B cell (primary cell): ENCODE measurements at regions of chr15 and their contacts with region 1.

Region 1: GRCh38 chr15:92903941-92904831 is 4.1 kb downstream of the CHD2 start:
- DNase-seq: peak; percentile 99
- ATAC-seq: peak; percentile 82
- H3K4me3 ChIP-seq: peak overlapping the region; percentile 64 to 100 (median 85)
- H3K4me3 Mint-ChIP-seq: peak overlapping the region; percentile 92
- H3K27ac ChIP-seq: peak overlapping the region; percentile 95 to 97
- H3K27ac Mint-ChIP-seq: peak overlapping the region; percentile 100
- H3K4me1 ChIP-seq: peaks cover 48 to 57% of the 10 kb centered on the region in 2 donors
- H3K4me1 Mint-ChIP-seq: peaks cover 64% of the 10 kb centered on the region
- H3K27me3 ChIP-seq: no peaks in the 10 kb centered on the region
- H3K27me3 Mint-ChIP-seq: no peaks in the 10 kb centered on the region
- CTCF ChIP-seq: no peak

Region 2: DNA sequence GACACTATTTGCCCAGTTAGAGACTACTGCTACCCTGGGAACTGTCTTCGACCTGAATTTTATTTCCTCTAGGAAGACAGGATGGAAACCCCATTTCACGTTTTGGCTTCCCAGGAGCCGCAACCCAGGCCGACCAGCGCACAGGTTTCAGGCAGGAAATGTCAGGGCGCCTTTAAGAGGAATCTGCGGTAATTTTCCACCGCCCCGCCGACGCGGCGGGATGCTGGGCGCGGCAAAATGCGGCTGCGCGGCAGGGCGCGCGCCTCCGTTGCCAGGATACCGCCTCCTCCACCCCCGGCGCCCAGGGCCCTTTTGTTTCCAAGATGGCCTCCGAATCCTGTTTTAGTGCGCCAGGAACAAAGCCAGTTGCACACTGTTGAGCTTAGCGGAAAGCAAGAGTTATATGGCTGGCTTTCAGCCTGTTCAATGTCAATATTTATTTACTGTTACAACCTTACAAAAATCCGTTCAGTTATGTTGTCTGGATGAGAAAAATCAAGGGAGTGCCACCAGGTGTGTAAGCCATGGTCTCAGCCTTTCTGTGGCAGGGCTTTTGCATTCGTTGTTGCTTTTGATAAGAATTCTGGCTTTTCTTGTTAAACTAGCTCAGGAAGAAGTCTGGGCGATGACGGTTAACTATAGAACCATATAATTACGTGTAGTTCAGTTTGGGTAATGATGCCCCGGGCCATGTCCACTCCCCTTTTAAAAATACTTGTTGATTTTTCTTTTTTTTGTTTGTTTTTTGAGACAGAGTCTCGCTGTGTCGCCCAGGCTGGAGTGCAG is 83.8 kb before region 1 on chr15:
- CTCF ChIA-PET with region 1: interaction called, 5 read pairs
- POLR2A ChIA-PET with region 1: interaction called, 11 read pairs
- intact Hi-C with region 1: no loop called
- DNase-seq: peak; percentile 90
- ATAC-seq: peak; percentile 80
- H3K4me3 ChIP-seq: peak overlapping the region; percentile 58 to 92 (median 75)
- H3K4me3 Mint-ChIP-seq: peak overlapping the region; percentile 90
- H3K27ac ChIP-seq: peak overlapping the region; percentile 82 to 83
- H3K27ac Mint-ChIP-seq: peak overlapping the region; percentile 95
- H3K4me1 ChIP-seq: peaks cover 25 to 49% of the 10 kb centered on the region in 2 donors
- H3K4me1 Mint-ChIP-seq: peaks cover 60% of the 10 kb centered on the region
- H3K27me3 ChIP-seq: no peaks in the 10 kb centered on the region
- H3K27me3 Mint-ChIP-seq: no peaks in the 10 kb centered on the region
- CTCF ChIP-seq: no peak

Region 3: DNA sequence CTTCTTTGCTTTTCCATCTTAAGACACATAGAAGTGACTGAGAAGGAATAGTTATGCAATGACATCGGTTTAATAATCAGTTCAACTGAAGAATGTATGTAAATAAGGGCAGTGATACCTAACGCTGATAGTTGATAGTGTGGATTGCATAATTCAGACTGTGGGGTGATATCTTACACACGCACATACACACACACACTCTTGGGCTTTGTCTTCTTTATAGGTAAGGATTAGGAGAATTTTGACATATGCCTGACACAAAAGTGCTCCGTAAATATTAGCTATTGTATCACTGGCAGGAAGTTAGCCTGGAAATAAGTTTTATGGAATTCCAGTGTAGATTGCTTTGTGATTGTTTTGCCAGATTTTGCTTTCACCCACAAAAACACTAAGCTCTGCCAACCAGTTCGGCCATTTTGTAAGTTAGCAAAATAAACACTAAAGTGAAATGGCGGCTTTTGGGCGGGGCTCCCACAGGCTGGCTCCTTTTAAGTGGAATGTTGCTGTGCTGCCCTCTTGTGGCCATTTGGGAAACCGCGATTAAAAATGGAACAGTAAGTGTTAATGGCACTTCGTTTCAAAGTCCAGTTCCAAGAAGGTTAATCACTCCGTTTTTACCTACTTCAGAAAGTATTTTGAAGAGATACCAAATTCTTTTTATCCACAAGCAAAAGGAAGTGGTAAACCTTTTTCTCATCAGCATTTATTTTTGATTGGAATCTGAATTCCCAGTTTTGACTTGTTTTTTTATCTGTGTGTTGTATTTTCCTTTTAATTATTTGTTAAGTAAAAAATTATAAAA is 13.6 kb after region 1 on chr15:
- CTCF ChIA-PET with region 1: interaction called, 146 read pairs
- POLR2A ChIA-PET with region 1: interaction called, 25 read pairs
- intact Hi-C with region 1: loop called (anchors 1 kb)
- DNase-seq: peak; percentile 94
- ATAC-seq: peak; percentile 44
- H3K4me3 ChIP-seq: peak overlapping the region in 1 of 5 experiments; percentile 8
- H3K4me3 Mint-ChIP-seq: peak overlapping the region; percentile 74
- H3K27ac ChIP-seq: peak overlapping the region; percentile 83 to 93
- H3K27ac Mint-ChIP-seq: peak overlapping the region; percentile 93
- H3K4me1 ChIP-seq: peaks cover 73 to 77% of the 10 kb centered on the region in 2 donors
- H3K4me1 Mint-ChIP-seq: peaks cover 80% of the 10 kb centered on the region
- H3K27me3 ChIP-seq: no peaks in the 10 kb centered on the region
- H3K27me3 Mint-ChIP-seq: no peaks in the 10 kb centered on the region
- CTCF ChIP-seq: peak; percentile 95